Gastrocnemius medialis (tissue), 4 donors: ENCODE measurements at regions of chr1 and their contacts with region 1.

Region 1: DNA sequence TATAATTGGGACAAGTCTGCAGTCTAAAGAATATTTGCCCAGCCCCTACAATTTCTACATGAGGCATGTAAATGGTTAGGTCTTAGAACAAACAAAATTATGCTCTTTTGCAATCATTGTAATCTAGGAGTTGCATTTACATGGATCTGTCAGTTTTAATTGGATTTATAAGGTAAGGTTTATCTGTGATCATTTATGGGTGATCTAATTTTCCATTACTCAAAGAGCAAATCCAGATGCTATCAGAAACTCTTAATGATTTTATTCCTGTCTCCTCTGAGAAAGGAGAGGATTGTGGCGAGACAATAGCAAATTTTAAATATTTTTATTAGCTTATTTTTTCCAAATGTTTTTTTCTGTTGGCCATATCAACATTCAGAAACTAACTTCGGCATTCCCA is 14.1 kb upstream of the NEGR1 start:
- DNase-seq: no peak
- ATAC-seq: no peak
- H3K4me3 ChIP-seq: no peak overlapping the region
- H3K27ac ChIP-seq: no peak overlapping the region
- H3K4me1 ChIP-seq: no peaks in the 10 kb centered on the region
- H3K27me3 ChIP-seq: no peaks in the 10 kb centered on the region
- CTCF ChIP-seq: no peak
- POLR2A ChIP-seq: no peak

Region 2: GRCh38 chr1:72341661-72342060 is 45.2 kb after region 1 on chr1:
- in situ Hi-C with region 1: loop called in 1 of 4 experiments (anchors 5 kb)
- intact Hi-C with region 1: no loop called
- DNase-seq: no peak
- ATAC-seq: no peak
- H3K4me3 ChIP-seq: no peak overlapping the region
- H3K27ac ChIP-seq: no peak overlapping the region
- H3K4me1 ChIP-seq: no peaks in the 10 kb centered on the region
- H3K27me3 ChIP-seq: no peaks in the 10 kb centered on the region
- CTCF ChIP-seq: no peak
- POLR2A ChIP-seq: no peak

Region 3: DNA sequence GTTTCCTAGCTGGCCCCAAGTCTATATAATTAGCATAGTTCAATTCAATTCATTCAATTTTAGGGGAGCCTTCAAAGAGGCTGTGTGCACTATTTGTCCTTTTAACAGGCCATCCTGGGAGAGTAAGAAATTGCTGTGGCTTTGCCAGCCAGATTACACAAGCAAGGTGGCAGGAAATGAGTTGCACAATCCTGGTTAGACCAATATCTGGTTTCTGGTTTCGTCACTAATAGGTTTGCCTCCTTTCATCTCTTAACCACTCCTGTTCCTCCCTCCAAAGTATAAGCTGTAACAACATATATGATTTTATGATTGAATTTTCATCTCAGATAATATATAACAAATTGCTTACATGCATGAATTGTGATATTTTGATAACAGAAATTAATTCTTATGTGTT is 70.0 kb after region 1 on chr1:
- in situ Hi-C with region 1: no loop called
- intact Hi-C with region 1: no loop called
- DNase-seq: peak in 1 of 2 donors; percentile 44
- ATAC-seq: peak; percentile 66 to 87
- H3K4me3 ChIP-seq: no peak overlapping the region
- H3K27ac ChIP-seq: no peak overlapping the region
- H3K4me1 ChIP-seq: no peaks in the 10 kb centered on the region
- H3K27me3 ChIP-seq: no peaks in the 10 kb centered on the region
- CTCF ChIP-seq: no peak
- POLR2A ChIP-seq: no peak